A549 (cell line): ENCODE measurements at regions of chr20 and their contacts with region 1.

Region 1: GRCh38 chr20:53915446-53916172 is 154.8 kb downstream of the BCAS1 start:
- DNase-seq: peak; percentile 89 to 92
- ATAC-seq: peak; percentile 94 to 97
- H3K4me3 ChIP-seq: peak overlapping the region; percentile 54
- H3K27ac ChIP-seq: peak overlapping the region; percentile 89 to 92
- H3K4me1 ChIP-seq: peaks cover 31% of the 10 kb centered on the region
- CTCF ChIP-seq: peak; percentile 96
- EP300 ChIP-seq: no peak
- POLR2A ChIP-seq: no peak
- RAD21 ChIP-seq: peak; percentile 94 to 97

Region 2: GRCh38 chr20:53578492-53579222 is 337.0 kb before region 1 on chr20:
- CTCF ChIA-PET with region 1: interaction called, 27 read pairs
- POLR2A ChIA-PET with region 1: no interaction called
- DNase-seq: peak; percentile 90
- ATAC-seq: peak; percentile 57 to 73; a peak in 5 of 6 replicates
- H3K4me3 ChIP-seq: peak overlapping the region; percentile 21; the same call in 2 of the 3 replicates
- H3K27ac ChIP-seq: peak overlapping the region; percentile 75 to 87
- H3K4me1 ChIP-seq: peaks cover 62% of the 10 kb centered on the region
- CTCF ChIP-seq: peak; percentile 91
- EP300 ChIP-seq: no peak
- POLR2A ChIP-seq: no peak
- RAD21 ChIP-seq: peak; percentile 83 to 91

Region 3: GRCh38 chr20:53738039-53738944 is 177.3 kb before region 1 on chr20:
- CTCF ChIA-PET with region 1: interaction called, 10 read pairs
- POLR2A ChIA-PET with region 1: interaction called, 18 read pairs
- DNase-seq: peak; percentile 67 to 95
- ATAC-seq: peak; percentile 90 to 91
- H3K4me3 ChIP-seq: peak overlapping the region; percentile 27; the same call in 2 of the 3 replicates
- H3K27ac ChIP-seq: peak overlapping the region; percentile 89 to 90
- H3K4me1 ChIP-seq: peaks cover 72% of the 10 kb centered on the region
- CTCF ChIP-seq: no peak
- EP300 ChIP-seq: no peak
- POLR2A ChIP-seq: peak; percentile 41
- RAD21 ChIP-seq: peak; percentile 13 to 37; a peak in 3 of 5 replicates

Region 4: GRCh38 chr20:53828682-53829254 is 86.8 kb before region 1 on chr20:
- CTCF ChIA-PET with region 1: interaction called, 15 read pairs
- POLR2A ChIA-PET with region 1: interaction called, 5 read pairs
- DNase-seq: peak; percentile 60 to 84
- ATAC-seq: peak; percentile 83 to 84
- H3K4me3 ChIP-seq: peak overlapping the region; percentile 28
- H3K27ac ChIP-seq: peak overlapping the region; percentile 93 to 97
- H3K4me1 ChIP-seq: peaks cover 63% of the 10 kb centered on the region
- CTCF ChIP-seq: peak; percentile 35
- EP300 ChIP-seq: no peak
- POLR2A ChIP-seq: no peak
- RAD21 ChIP-seq: peak; percentile 46 to 48; a peak in 3 of 5 replicates

Region 5: DNA sequence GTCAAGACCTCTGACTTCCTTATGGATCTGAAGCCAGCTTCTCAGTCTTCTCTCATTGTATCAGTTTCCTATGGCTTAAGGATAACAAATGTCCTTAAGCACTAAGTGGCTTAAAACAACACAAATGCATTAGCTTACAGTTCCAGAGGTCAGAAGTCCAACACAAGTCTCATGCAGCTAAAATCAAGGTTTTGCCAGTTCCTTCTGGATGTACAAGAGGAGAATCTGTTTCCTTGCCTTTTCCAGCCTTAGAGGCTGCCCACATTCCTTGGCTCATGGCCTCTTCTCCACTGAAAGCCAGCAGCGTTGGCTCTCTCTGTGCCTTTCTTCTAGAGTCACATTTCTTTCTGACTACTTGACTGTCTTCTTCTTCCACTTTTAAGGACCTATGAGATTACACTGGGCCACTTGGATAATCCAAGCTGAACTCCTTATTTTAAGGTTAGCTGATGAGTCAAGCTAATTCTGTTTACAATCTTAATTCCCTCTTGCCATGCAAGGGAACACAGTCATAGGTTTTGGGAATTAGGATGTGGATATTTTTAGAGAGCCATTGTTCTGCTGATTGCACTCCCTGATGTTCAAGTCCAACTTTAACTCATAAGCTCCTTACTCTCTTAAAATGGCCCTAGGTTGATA is 24.2 kb before region 1 on chr20:
- CTCF ChIA-PET with region 1: interaction called, 18 read pairs
- POLR2A ChIA-PET with region 1: interaction called, 4 read pairs
- DNase-seq: no peak
- ATAC-seq: no peak
- H3K4me3 ChIP-seq: no peak overlapping the region
- H3K27ac ChIP-seq: peak overlapping the region in 1 of 2 experiments; percentile 55; a peak in 3 of 6 replicates
- H3K4me1 ChIP-seq: peaks cover 26% of the 10 kb centered on the region
- CTCF ChIP-seq: no peak
- EP300 ChIP-seq: no peak
- POLR2A ChIP-seq: no peak
- RAD21 ChIP-seq: no peak

Region 6: DNA sequence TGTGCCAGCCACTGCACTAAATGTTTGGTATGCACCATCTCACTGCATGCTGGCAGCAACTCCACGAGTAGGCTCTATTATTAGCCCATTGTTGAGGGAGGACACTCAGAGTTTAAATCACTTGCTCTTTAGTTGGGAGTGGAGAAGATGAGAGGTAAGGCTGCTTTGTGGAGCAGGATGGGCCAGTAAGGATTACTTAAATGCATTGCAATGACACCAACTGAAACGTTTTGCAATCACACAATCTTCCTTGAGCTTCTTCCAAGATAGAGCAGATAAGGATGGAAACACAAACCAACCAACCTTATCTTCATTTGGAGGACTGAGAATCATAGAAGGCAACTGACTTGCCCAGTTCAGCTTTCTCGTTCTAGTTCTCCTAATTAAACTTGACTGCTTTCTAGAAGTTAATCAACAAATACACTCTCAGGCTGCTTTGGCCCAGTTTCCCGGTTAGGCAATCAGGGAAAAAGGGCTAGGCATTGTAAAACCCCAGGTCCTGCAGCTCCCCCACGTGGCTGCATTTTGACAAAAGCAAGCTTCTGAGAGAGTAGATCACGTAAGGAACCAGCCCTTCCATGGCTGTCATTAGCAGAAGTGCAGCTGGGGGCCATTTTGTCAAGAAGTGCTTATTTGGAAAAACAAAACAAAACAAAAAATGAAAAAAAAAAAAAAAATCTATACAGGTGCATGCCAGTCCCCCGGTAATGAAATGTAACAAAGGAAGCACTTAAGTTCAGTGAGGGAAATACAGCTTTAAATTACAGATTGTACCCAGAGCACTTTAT is 24.2 kb after region 1 on chr20:
- CTCF ChIA-PET with region 1: interaction called, 140 read pairs
- POLR2A ChIA-PET with region 1: interaction called, 6 read pairs
- DNase-seq: peak; percentile 79 to 94
- ATAC-seq: peak; percentile 91 to 94
- H3K4me3 ChIP-seq: no peak overlapping the region
- H3K27ac ChIP-seq: peak overlapping the region; percentile 62 to 78
- H3K4me1 ChIP-seq: peaks cover 60% of the 10 kb centered on the region
- CTCF ChIP-seq: peak; percentile 92
- EP300 ChIP-seq: no peak; a peak in 1 of 5 replicates
- POLR2A ChIP-seq: no peak
- RAD21 ChIP-seq: peak; percentile 98 to 99

Region 7: DNA sequence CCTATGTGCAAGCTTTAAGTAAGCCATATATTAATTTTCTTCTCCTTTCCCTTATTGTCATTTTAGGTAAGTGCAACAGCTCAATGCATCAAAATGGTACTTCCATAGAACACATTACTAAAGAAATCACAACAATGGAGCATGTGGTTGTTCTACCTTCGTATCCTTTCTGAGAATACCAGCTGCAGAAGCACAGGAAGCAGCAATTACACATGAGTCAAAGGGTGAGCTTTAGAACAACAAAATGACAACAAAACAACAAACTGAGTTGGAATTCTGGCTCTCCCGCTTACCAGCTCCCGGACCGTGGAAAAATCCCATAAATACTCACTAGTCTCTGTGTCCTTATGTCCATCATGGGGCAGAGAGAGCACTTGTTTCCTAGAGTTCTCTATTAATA is 45.9 kb after region 1 on chr20:
- CTCF ChIA-PET with region 1: no interaction called
- POLR2A ChIA-PET with region 1: no interaction called
- DNase-seq: no peak
- ATAC-seq: no peak
- H3K4me3 ChIP-seq: no peak overlapping the region
- H3K27ac ChIP-seq: no peak overlapping the region
- H3K4me1 ChIP-seq: peaks cover 7% of the 10 kb centered on the region; the same call in 2 of the 3 replicates
- CTCF ChIP-seq: no peak
- EP300 ChIP-seq: no peak
- POLR2A ChIP-seq: no peak
- RAD21 ChIP-seq: no peak

Region 8: DNA sequence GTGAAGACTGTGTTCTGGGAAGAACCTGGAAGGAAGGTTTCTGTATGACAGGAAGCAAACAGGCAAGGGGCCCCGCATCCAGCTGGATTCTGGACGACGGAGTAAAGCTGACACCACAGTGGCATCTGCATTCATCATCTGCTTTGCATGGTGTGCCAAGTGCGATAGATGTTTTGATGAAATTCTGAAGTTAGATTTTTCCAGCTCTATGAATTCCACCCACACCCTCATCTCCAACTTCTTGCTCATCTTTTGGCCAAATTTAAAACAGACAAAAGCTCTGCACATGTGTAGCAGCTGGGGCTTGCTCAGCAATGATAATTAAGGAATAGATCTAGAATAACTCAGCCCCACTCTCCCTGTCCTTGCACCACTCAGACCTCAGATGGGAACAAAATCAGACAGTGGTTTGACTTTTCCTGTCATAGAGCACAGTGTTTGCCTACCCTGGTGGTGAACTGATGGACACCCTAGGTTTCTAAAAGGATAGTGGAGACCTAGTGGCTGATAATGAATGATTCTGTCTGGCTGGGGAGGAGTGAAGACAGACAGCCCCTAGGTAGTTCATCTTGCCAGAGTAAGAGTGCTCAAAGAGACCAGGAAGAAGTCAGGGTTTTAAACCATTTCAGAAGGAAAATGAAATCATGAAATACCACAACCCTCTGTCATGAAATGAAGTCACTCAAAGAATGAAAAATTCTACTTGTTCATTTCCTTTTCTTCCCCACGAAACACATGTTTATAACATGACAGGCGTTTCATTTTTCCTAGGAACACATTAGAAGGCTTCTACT is 68.9 kb after region 1 on chr20:
- CTCF ChIA-PET with region 1: no interaction called
- POLR2A ChIA-PET with region 1: no interaction called
- DNase-seq: no peak
- ATAC-seq: no peak
- H3K4me3 ChIP-seq: no peak overlapping the region
- H3K27ac ChIP-seq: no peak overlapping the region
- H3K4me1 ChIP-seq: no peaks in the 10 kb centered on the region
- CTCF ChIP-seq: no peak
- EP300 ChIP-seq: no peak
- POLR2A ChIP-seq: no peak
- RAD21 ChIP-seq: no peak